MCF 10A (cell line): ENCODE measurements at regions of chr5 and their contacts with region 1.

Region 1: GRCh38 chr5:159316519-159317383 is 13.5 kb downstream of the IL12B start:
- DNase-seq: peak; percentile 77
- H3K4me3 Mint-ChIP-seq: no peak overlapping the region
- H3K27ac Mint-ChIP-seq: no peak overlapping the region
- H3K4me1 Mint-ChIP-seq: no peaks in the 10 kb centered on the region
- H3K27me3 Mint-ChIP-seq: no peaks in the 10 kb centered on the region
- CTCF ChIP-seq: peak; percentile 91

Region 2: GRCh38 chr5:159156426-159157238 is 160.1 kb before region 1 on chr5:
- CTCF ChIA-PET with region 1: interaction called, 64 read pairs
- POLR2A ChIA-PET with region 1: interaction called, 9 read pairs
- intact Hi-C with region 1: loop called (anchors 1 kb)
- DNase-seq: peak; percentile 87
- H3K4me3 Mint-ChIP-seq: no peak overlapping the region
- H3K27ac Mint-ChIP-seq: peak overlapping the region; percentile 28
- H3K4me1 Mint-ChIP-seq: peaks cover 12% of the 10 kb centered on the region
- H3K27me3 Mint-ChIP-seq: no peaks in the 10 kb centered on the region
- CTCF ChIP-seq: peak; percentile 88

Region 3: DNA sequence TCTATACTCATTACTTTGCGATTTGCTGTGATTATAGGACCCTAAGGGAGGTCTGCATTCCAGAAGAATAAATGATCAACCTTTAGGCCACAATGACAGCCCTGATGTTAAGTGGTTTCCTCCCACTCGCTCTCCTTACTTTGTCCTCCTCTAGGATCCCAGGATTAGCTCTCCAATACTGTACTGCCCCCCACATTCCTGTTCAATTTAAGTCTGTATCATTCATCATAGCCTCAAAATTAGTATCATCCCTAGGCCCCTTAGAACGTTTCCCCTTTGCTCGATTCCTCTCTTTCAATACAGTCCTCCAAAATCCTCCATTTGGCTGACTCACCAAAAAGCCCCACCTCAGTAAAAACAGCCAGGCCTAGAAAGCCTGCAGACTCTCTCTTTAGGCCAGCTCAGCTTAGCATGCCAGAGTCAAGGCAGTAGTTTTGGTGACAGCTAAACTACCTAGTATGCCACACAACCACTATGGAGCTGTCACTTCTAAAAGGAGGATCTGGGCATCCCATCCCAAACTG is 131.8 kb before region 1 on chr5:
- CTCF ChIA-PET with region 1: interaction called, 11 read pairs
- POLR2A ChIA-PET with region 1: no interaction called
- intact Hi-C with region 1: no loop called
- DNase-seq: peak; percentile 77
- H3K4me3 Mint-ChIP-seq: peak overlapping the region; percentile 48
- H3K27ac Mint-ChIP-seq: peak overlapping the region; percentile 96
- H3K4me1 Mint-ChIP-seq: peaks cover 81% of the 10 kb centered on the region
- H3K27me3 Mint-ChIP-seq: no peaks in the 10 kb centered on the region
- CTCF ChIP-seq: no peak

Region 4: GRCh38 chr5:159286420-159287035 is 30.2 kb before region 1 on chr5:
- CTCF ChIA-PET with region 1: interaction called, 154 read pairs
- POLR2A ChIA-PET with region 1: interaction called, 19 read pairs
- intact Hi-C with region 1: loop called (anchors 1 kb)
- DNase-seq: peak; percentile 62
- H3K4me3 Mint-ChIP-seq: no peak overlapping the region
- H3K27ac Mint-ChIP-seq: no peak overlapping the region
- H3K4me1 Mint-ChIP-seq: no peaks in the 10 kb centered on the region
- H3K27me3 Mint-ChIP-seq: no peaks in the 10 kb centered on the region
- CTCF ChIP-seq: peak; percentile 67

Region 5: DNA sequence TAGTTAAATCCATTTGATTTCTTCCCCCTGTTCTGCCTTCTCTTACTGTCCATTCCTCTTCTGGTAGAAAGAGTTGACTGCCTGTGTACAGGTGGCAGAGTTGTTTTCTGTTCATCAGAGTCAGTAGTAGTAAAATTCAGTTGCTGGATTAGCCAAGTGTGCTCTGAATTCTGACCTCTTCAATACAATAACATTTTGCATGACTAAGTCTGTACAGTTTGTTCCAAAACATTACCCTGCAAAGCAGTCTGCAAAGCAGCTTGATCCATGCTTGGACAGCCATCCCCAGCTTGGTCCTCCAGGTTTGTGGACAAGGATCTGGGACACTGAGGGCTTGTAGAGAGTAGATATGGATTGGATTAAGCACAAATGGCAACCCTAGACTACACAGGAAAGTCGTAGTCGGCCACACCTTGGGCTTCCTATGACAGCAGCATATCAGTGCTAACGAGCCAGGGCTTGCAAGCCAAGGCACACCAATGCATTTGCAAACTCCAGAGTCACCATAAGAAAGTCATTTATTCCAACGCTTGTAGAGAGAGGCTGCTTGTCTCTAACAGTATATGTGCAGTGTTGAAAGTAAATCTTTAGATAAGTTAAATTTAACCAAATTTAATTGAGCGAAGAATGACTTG is 11.7 kb before region 1 on chr5:
- CTCF ChIA-PET with region 1: interaction called, 32 read pairs
- POLR2A ChIA-PET with region 1: interaction called, 8 read pairs
- intact Hi-C with region 1: no loop called
- DNase-seq: peak; percentile 28
- H3K4me3 Mint-ChIP-seq: no peak overlapping the region
- H3K27ac Mint-ChIP-seq: peak overlapping the region; percentile 74
- H3K4me1 Mint-ChIP-seq: peaks cover 20% of the 10 kb centered on the region
- H3K27me3 Mint-ChIP-seq: no peaks in the 10 kb centered on the region
- CTCF ChIP-seq: no peak